Thyroid gland (tissue), 4 donors: ENCODE measurements at regions of chr9 and their contacts with region 1.

Region 1: GRCh38 chr9:72827950-72828731 is 124.7 kb downstream of the ALDH1A1 start:
- DNase-seq: no peak
- H3K4me3 ChIP-seq: no peak overlapping the region
- H3K27ac ChIP-seq: no peak overlapping the region
- H3K4me1 ChIP-seq: no peaks in the 10 kb centered on the region
- H3K27me3 ChIP-seq: no peaks in the 10 kb centered on the region
- CTCF ChIP-seq: no peak
- POLR2A ChIP-seq: no peak

Region 2: GRCh38 chr9:72278959-72279358 is 549.2 kb before region 1 on chr9:
- intact Hi-C with region 1: loop called (anchors 5 kb)
- DNase-seq: no peak
- H3K4me3 ChIP-seq: no peak overlapping the region
- H3K27ac ChIP-seq: no peak overlapping the region
- H3K4me1 ChIP-seq: no peaks in the 10 kb centered on the region
- H3K27me3 ChIP-seq: no peaks in the 10 kb centered on the region
- CTCF ChIP-seq: no peak
- POLR2A ChIP-seq: no peak